ENCODE measurements at regions of chr15 and their contacts with region 1.

Region 1: DNA sequence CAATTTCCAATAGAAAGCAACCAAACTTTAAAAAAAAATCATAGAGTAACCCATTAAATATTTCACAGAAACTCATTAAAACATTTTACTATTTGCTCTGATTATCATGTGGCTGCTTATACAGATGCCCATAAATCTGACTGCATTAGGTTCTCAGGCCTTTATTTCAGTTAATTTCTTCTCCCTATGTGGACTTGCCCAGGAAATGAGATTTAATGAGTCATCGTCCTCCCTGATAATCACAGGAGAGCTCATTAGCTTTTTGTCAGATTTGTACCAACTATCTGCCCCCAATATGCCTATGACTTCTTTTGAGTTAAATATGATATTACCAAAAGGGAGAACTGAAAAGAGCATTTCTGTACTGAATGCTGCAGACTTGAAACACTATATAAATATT is 168.0 kb downstream of the FOXB1 start:
- DNase-seq: no peak
- ATAC-seq: no peak
- H3K4me3 ChIP-seq: no peak overlapping the region
- H3K4me3 Mint-ChIP-seq: no peak overlapping the region
- H3K27ac ChIP-seq: no peak overlapping the region
- H3K27ac Mint-ChIP-seq: no peak overlapping the region
- H3K4me1 ChIP-seq: no peaks in the 10 kb centered on the region
- H3K4me1 Mint-ChIP-seq: no peaks in the 10 kb centered on the region
- H3K27me3 ChIP-seq: no peaks in the 10 kb centered on the region
- H3K27me3 Mint-ChIP-seq: peaks cover 6% of the 10 kb centered on the region in 2 donors

Region 2: DNA sequence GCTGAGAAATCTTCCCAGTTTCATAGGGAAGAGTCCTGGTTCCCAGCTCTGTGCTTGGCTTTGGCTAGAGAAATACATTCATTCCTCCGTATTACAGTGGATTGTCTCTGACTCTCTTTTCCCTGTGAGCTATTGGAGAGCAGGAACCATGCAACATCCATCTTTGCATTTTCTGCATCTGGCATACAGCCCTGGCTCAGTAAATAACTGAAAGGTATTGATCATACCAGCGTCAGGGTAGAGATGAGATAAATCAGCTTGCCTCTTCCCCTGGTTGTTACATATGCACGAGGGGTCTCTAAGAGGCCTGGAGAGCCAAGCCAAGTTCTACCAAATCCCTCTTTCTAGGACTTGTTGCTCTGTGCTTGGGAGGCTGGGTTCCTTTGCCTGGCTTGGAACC is 132.8 kb before region 1 on chr15:
- CTCF ChIA-PET with region 1: no interaction called
- POLR2A ChIA-PET with region 1: interaction called in 1 of 2 experiments, 11 read pairs
- DNase-seq: no peak
- ATAC-seq: no peak
- H3K4me3 ChIP-seq: no peak overlapping the region
- H3K4me3 Mint-ChIP-seq: no peak overlapping the region
- H3K27ac ChIP-seq: no peak overlapping the region
- H3K27ac Mint-ChIP-seq: no peak overlapping the region
- H3K4me1 ChIP-seq: no peaks in the 10 kb centered on the region
- H3K4me1 Mint-ChIP-seq: peaks cover 4 to 6% (median 4%) of the 10 kb centered on the region in 3 donors
- H3K27me3 ChIP-seq: peaks cover 0 to 11% of the 10 kb centered on the region in 2 experiments
- H3K27me3 Mint-ChIP-seq: peaks cover 0 to 8% of the 10 kb centered on the region in 2 donors

Region 3: GRCh38 chr15:60137711-60138396 is 34.3 kb before region 1 on chr15:
- CTCF ChIA-PET with region 1: no interaction called
- POLR2A ChIA-PET with region 1: no interaction called
- DNase-seq: no peak
- ATAC-seq: no peak
- H3K4me3 ChIP-seq: no peak overlapping the region
- H3K4me3 Mint-ChIP-seq: no peak overlapping the region
- H3K27ac ChIP-seq: no peak overlapping the region
- H3K27ac Mint-ChIP-seq: no peak overlapping the region
- H3K4me1 ChIP-seq: no peaks in the 10 kb centered on the region
- H3K4me1 Mint-ChIP-seq: no peaks in the 10 kb centered on the region
- H3K27me3 ChIP-seq: peaks cover 0 to 2% of the 10 kb centered on the region in 2 experiments
- H3K27me3 Mint-ChIP-seq: peaks cover 24 to 26% of the 10 kb centered on the region in 2 donors

Region 4: GRCh38 chr15:60191821-60192220 is 19.7 kb after region 1 on chr15:
- CTCF ChIA-PET with region 1: no interaction called
- POLR2A ChIA-PET with region 1: no interaction called
- DNase-seq: no peak
- ATAC-seq: no peak
- H3K4me3 ChIP-seq: no peak overlapping the region
- H3K4me3 Mint-ChIP-seq: no peak overlapping the region
- H3K27ac ChIP-seq: no peak overlapping the region
- H3K27ac Mint-ChIP-seq: no peak overlapping the region
- H3K4me1 ChIP-seq: no peaks in the 10 kb centered on the region
- H3K4me1 Mint-ChIP-seq: no peaks in the 10 kb centered on the region
- H3K27me3 ChIP-seq: peaks cover 0 to 6% of the 10 kb centered on the region in 2 experiments
- H3K27me3 Mint-ChIP-seq: peaks cover 46 to 51% of the 10 kb centered on the region in 2 donors